Heart left ventricle (tissue), 16 donors: ENCODE measurements at regions of chr3 and their contacts with region 1.

Region 1: DNA sequence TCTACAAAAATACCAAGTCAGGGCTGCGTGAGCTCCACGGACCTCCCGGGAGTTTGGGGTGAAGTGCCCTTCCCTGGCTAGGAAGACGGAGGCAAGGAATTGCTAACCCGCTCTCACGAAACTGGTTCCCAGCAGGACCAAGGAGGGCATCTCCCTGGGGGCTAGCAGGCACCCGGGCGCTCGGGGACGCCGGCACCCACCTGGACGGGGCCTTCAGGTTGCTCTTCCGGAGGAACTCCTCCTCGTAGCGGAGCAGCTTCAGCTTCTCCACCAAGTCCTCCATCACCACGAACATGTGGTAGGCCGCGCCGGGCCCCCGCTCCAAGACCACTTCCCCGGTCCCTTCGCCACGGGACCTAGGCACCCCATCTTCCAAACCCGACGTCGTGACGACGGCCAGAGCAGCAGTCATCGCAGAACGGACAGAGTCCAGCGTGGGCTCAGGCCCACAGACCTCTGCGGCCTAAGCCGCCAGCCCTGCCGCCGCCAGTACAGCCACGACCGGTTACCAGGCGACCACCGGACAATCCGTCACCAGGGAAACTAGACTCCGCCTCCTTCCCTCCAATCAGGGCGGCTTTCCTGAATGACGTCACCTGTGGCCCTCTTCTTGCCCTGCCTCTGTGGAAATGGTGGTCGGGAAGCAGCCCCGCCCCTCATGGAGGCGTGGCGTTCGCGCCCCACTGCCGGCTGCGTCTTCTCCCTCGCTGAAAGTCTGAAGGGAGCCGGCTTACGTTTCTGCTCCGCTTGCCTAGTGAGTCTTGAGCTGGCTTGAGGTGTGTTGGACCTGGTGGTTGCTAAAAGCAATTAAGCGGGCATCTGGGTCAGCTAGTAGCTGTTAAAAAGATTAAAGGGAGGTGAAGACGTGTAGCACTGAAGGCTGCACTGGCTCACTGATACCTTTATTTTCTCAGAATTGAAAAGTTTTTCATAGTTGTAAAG is at the start of gene IFT57:
- DNase-seq: peak; percentile 96 to 98 (median 98)
- ATAC-seq: peak; percentile 100
- H3K4me3 ChIP-seq: peak within 1 kb of the TSS; percentile 66 to 91 (median 81)
- H3K27ac ChIP-seq: peak within 1 kb of the TSS in 11 of 12 donors; percentile 6 to 88 (median 73)
- H3K4me1 ChIP-seq: peaks cover 0 to 49% (median 13%) of the 10 kb centered on the region in 12 donors
- H3K27me3 ChIP-seq: no peaks in the 10 kb centered on the region
- CTCF ChIP-seq: no peak
- POLR2A ChIP-seq: peak in 1 of 2 donors; percentile 45
- total RNA-seq, gene IFT57: 11.8 to 36.4 (median 22.9) TPM

Region 2: DNA sequence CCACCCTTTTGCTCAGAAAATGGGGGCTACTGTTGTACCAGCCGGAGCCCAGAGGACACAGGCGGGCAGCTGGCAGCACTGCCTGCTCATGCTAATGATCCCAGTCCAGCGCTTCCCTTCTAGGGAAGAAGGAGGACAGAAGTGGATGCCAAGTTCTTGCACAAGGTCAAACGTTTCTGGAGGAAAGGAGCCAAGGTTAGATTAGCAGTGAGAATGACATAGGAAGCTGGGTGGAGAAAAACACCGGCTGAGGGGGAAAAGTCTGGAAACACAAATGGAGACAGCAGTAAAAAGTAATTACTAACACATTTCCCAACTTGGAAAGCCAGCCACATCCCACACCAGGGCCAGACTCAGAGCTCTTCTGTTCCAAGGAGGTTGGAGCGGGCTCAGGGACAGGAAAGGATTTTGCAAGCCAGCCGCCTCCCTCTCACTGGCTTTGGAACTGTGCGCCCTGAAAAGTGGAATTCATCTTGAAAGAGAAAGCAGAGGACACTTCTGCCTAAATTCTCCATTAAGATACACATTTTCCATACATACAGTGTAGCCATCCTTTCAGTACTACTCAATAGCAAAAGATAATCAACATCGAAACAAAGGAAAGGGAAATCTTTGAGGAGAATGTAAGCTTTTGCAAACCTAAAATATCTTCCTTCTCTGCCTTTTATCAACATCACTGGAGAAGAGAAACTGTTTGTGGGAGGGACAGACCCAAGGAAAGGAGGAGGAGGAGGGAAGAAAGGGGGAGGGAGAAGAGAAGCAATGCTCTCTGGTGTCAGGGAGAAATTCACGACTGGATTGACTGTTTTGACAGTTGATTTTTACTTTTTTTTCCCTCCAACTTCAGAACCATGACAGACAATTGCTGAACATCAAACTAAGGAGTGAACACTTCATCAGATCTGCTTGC is 264.9 kb before region 1 on chr3:
- intact Hi-C with region 1: loop called in 1 of 10 experiments (anchors 10 kb)
- DNase-seq: peak; percentile 75 to 86 (median 79)
- ATAC-seq: peak; percentile 92 to 97 (median 95)
- H3K4me3 ChIP-seq: peak overlapping the region in 9 of 12 donors; percentile 0 to 43 (median 28)
- H3K27ac ChIP-seq: peak overlapping the region; percentile 29 to 83 (median 69)
- H3K4me1 ChIP-seq: peaks cover 0 to 38% (median 17%) of the 10 kb centered on the region in 12 donors
- H3K27me3 ChIP-seq: no peaks in the 10 kb centered on the region
- CTCF ChIP-seq: no peak
- POLR2A ChIP-seq: no peak

Region 3: DNA sequence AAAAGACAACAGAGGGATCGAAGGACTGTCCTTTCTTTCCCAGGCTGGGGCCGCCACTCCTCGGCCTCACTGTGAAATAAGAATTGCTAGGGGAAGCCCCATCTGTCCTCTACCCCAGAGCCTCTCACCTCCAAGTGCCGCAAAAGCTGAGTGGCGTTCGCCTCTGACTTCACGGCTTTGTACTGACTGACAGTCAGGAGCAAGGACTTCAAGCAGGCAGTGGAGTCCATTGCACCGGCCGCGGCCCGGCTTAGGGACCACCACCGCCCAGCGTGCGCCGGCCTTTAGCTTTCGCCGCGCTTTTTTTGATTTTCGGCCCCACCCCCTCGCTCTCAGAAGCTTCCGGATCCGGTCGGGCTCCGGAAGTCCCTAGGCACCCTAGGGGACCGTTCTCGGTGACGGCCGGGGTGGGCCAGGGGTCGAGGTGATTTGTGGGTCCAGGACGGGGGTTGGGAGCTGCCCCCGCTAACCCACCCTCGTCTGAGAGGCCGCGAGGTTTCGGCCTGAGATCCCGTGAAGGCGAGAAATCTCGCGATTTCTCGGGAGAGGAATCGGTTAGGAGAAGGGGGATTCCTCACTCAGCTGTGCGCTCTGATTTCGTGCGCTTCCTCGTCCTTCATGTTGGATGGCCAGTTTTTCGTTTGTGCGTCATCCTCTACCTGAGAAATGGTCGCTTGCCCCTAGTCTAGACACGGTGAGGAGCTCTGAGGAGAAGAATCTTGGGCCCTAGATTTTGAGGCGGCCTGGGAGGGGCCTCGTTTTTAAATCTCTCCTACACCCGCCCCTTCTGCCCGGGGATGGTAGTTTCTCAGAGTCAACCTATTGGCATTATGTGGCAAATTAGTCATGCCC is 367.2 kb after region 1 on chr3 and contains the starts of genes CIP2A and DZIP3:
- intact Hi-C with region 1: loop called in 2 of 10 experiments (anchors 10 kb)
- DNase-seq: peak; percentile 86 to 91 (median 89)
- ATAC-seq: peak; percentile 98 to 99 (median 98)
- H3K4me3 ChIP-seq: peak within 1 kb of the TSS; percentile 62 to 90 (median 76)
- H3K27ac ChIP-seq: peak within 1 kb of the TSS; percentile 84 to 95 (median 90)
- H3K4me1 ChIP-seq: peaks cover 0 to 30% (median 10%) of the 10 kb centered on the region in 12 donors
- H3K27me3 ChIP-seq: no peaks in the 10 kb centered on the region
- CTCF ChIP-seq: no peak
- POLR2A ChIP-seq: peak in 1 of 2 donors; percentile 72
- total RNA-seq, gene CIP2A: 0.94 to 4.7 (median 1.3) TPM
- total RNA-seq, gene DZIP3: 8.6 to 24.9 (median 20.9) TPM